Mammary epithelial cell (primary cell): ENCODE measurements at regions of chr6 and their contacts with region 1.

Region 1: DNA sequence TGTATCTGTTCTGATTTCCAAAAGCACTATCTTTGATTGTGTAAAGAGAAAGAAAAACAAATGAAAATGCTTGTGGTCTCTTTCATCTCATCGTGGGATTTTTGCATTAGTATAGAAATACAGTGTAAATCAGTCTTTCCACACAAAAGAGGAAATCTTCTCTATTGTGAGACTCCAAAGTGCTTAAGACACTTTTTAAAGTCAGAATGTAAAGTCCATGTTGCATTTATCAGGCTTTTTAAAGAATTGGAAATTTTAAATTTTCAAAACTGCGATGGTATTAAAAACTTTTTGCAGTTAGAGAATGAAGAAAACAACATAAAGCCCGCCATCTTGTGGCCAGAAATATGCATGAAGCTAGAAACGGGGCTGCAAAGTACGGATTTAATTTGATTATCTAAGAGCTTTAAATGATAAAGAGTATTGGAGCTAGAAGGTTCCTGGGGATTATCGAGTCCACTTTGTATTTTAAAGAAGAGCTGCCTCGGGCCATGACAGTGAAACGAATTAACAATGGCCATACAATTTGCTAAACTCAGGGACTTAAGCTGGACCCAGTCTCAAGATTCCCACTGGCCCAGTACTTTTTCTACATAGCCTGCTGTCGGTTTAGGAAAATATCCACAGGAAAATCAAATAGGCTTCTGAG is 339.6 kb downstream of the ARHGAP18 start:
- DNase-seq: peak; percentile 24
- H3K4me3 ChIP-seq: no peak overlapping the region
- H3K27ac ChIP-seq: no peak overlapping the region
- H3K4me1 ChIP-seq: no peaks in the 10 kb centered on the region
- H3K27me3 ChIP-seq: no peaks in the 10 kb centered on the region
- CTCF ChIP-seq: peak; percentile 66 to 78

Region 2: GRCh38 chr6:127855542-127856159 is 1514.7 kb before region 1 on chr6:
- CTCF ChIA-PET with region 1: no interaction called
- dilution Hi-C with region 1: no loop called
- in situ Hi-C with region 1: no loop called
- intact Hi-C with region 1: loop called (anchors 5 kb)
- DNase-seq: no peak
- H3K4me3 ChIP-seq: no peak overlapping the region
- H3K27ac ChIP-seq: no peak overlapping the region
- H3K4me1 ChIP-seq: no peaks in the 10 kb centered on the region
- H3K27me3 ChIP-seq: no peaks in the 10 kb centered on the region
- CTCF ChIP-seq: peak; percentile 3 to 44

Region 3: DNA sequence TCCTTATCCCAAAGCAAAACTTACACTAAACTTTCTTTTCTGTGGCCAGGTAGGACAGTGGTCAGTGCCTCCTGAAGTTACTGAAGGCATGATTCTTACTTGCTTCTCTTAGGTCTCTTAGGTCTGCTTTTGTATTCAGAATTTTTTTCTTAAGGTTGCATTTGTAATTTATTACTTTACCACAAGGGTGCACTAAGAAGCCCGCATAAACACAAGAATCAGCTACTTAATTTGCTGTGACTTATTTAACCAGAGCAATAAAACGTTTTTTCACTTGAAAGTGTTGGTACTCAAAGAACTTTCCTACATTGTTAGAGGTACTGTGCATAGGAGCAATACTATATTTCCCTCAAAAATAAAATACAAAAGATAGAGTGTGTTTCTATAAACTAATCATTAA is 562.8 kb before region 1 on chr6:
- CTCF ChIA-PET with region 1: interaction called, 4 read pairs
- dilution Hi-C with region 1: no loop called
- in situ Hi-C with region 1: no loop called
- intact Hi-C with region 1: loop called (anchors 2 kb)
- DNase-seq: peak; percentile 8
- H3K4me3 ChIP-seq: no peak overlapping the region
- H3K27ac ChIP-seq: no peak overlapping the region
- H3K4me1 ChIP-seq: no peaks in the 10 kb centered on the region
- H3K27me3 ChIP-seq: no peaks in the 10 kb centered on the region
- CTCF ChIP-seq: peak; percentile 43 to 62

Region 4: DNA sequence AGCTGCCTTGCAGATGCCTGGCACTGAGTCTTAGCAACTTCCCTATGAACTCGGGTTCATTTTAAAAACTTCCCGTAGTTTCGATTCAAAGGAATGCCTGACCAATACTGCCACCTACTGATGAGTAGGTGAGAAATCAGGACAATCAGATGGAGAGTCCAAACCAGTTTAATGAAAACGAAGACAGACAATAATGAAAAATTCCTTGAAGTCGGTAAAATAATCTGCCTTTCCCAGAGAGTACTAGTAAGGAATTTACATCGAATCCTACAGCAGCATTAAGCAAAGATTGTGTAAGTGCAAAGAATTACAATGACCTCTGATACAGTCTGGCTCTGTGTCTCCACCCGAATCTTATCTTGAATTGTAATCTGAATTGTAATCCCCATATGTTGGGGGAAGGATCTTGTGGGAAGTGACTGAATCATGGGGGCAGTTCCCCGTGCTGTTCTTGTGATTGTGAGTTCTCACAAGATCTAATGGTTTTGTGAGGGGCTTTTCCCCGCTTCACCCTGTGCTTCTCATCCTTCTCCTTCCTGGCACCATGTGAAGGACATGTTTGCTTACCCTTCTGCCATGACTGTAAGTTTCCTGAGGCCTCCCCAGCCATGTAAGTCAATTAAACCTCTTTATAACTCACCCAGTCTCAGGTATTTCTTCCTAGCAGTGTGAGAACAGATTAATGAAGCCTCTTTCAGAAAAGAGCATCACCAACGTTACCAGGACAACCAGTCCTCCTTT is 205.2 kb after region 1 on chr6:
- CTCF ChIA-PET with region 1: no interaction called
- dilution Hi-C with region 1: no loop called
- in situ Hi-C with region 1: no loop called
- intact Hi-C with region 1: loop called (anchors 1 kb)
- DNase-seq: peak; percentile 70
- H3K4me3 ChIP-seq: no peak overlapping the region
- H3K27ac ChIP-seq: peak overlapping the region; percentile 41
- H3K4me1 ChIP-seq: peaks cover 8% of the 10 kb centered on the region
- H3K27me3 ChIP-seq: no peaks in the 10 kb centered on the region
- CTCF ChIP-seq: peak; percentile 69 to 76